MCF 10A (cell line): ENCODE measurements at regions of chr12 and their contacts with region 1.

Region 1: DNA sequence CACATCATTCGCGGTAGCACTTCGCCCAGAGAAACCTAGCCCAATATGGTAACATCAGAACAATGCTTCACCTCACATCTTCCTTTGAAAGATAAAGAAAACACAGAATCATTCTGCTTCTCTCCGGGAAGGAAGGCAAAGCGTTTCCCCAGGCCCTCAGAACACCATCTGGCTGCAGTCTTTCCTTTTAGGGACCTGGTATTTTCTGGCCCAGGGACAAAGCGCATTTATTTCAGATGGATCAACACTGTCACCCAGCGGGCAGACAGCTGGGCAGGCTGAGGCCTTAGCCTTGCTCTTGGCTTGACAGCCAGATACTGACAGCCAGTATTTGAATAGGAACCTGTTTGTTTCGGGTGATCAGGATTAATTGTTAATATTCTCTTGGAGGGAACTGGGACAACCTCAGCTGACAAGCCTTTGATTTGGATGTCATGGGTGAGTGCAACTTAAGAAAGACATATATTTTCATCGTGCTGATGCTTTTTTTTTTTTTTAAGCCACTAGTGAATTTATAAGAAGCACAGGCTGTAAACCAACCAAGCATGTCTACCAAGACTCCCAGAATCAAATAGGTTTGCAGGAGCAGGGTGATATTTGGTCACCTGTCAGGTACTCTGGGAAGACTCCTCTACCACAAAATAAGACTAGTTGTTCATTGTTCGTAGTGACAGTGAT is 118.9 kb downstream of the VEZT start:
- DNase-seq: peak; percentile 57
- H3K4me3 Mint-ChIP-seq: no peak overlapping the region
- H3K27ac Mint-ChIP-seq: no peak overlapping the region
- H3K4me1 Mint-ChIP-seq: peaks cover 6% of the 10 kb centered on the region
- H3K27me3 Mint-ChIP-seq: no peaks in the 10 kb centered on the region
- CTCF ChIP-seq: peak; percentile 71

Region 2: DNA sequence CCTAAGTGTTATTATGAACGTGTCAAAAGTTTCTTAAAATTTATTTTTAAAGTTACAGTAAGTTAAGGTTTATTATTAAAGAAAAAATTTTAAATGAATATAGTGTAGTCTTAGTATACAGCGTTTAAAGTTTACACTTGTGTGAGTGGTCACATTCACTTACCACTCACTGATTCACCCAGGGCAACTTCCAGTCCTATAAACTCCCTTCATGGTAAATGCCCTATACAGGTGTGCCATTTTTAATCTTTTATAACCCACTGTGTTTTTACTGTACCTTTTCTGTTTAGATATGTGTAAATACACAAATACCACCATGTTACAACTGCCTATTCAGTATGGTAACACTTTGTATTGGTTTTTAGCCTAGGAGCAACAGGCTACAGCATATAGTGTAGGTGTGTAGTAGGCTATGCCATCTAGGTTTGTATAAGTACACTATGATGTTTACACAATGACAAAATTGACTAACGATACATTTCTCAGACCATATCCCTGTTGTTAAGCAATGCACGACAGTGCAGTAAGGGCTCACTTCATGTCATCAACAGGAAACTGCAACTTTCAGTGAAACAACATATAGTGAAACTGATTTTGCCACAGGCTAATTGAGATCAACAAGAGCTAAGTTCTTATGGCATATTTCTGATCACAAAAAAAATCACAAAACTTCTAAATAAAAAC is 574.1 kb before region 1 on chr12:
- CTCF ChIA-PET with region 1: interaction called, 3 read pairs
- POLR2A ChIA-PET with region 1: no interaction called
- intact Hi-C with region 1: loop called (anchors 10 kb)
- DNase-seq: peak; percentile 50
- H3K4me3 Mint-ChIP-seq: no peak overlapping the region
- H3K27ac Mint-ChIP-seq: peak overlapping the region; percentile 92
- H3K4me1 Mint-ChIP-seq: peaks cover 7% of the 10 kb centered on the region
- H3K27me3 Mint-ChIP-seq: no peaks in the 10 kb centered on the region
- CTCF ChIP-seq: no peak

Region 3: DNA sequence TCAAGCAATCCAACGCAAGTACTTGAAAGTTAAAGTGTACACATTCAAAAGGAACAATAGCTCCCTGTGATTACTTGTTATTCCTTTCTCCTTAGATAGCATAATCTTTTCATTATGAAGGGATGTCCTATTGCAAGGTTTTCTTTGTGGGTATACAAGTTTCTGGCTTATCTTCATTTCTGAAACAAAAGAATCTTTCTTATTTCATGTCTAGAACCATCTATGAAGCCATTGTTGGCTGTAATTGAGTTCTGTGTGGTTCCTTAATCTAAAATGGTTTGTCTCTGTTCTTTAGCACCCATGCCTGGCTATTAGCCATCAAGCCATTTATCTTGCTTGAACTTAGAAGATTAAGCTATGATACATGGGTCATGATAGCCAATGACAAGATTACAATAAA is 23.9 kb before region 1 on chr12:
- CTCF ChIA-PET with region 1: no interaction called
- POLR2A ChIA-PET with region 1: no interaction called
- intact Hi-C with region 1: no loop called
- DNase-seq: no peak
- H3K4me3 Mint-ChIP-seq: no peak overlapping the region
- H3K27ac Mint-ChIP-seq: no peak overlapping the region
- H3K4me1 Mint-ChIP-seq: no peaks in the 10 kb centered on the region
- H3K27me3 Mint-ChIP-seq: no peaks in the 10 kb centered on the region
- CTCF ChIP-seq: no peak

Region 4: DNA sequence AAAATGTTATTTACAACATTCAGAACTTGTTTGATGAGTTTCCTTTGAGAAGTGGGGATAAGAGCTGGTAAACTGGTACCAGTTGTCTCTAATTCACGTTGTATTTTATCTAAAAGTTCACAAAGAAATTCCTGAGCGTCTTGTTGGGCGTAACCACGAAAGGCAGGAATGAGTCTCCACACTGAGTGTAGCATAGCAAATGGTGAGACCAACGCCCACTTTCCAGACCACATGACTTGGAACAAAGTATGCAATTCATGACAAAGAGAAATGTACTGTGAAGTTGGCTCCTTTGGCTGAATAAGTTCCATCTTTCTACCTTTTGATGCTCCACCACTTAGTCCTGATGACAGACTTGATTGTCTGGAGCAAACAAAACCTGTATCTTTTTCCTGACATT is 196.3 kb after region 1 on chr12:
- CTCF ChIA-PET with region 1: interaction called, 7 read pairs
- POLR2A ChIA-PET with region 1: no interaction called
- intact Hi-C with region 1: loop called (anchors 2 kb)
- DNase-seq: no peak
- H3K4me3 Mint-ChIP-seq: no peak overlapping the region
- H3K27ac Mint-ChIP-seq: no peak overlapping the region
- H3K4me1 Mint-ChIP-seq: peaks cover 18% of the 10 kb centered on the region
- H3K27me3 Mint-ChIP-seq: no peaks in the 10 kb centered on the region
- CTCF ChIP-seq: no peak

Region 5: GRCh38 chr12:96153131-96153725 is 816.7 kb after region 1 on chr12:
- CTCF ChIA-PET with region 1: no interaction called
- POLR2A ChIA-PET with region 1: no interaction called
- intact Hi-C with region 1: no loop called
- DNase-seq: no peak
- H3K4me3 Mint-ChIP-seq: no peak overlapping the region
- H3K27ac Mint-ChIP-seq: no peak overlapping the region
- H3K4me1 Mint-ChIP-seq: no peaks in the 10 kb centered on the region
- H3K27me3 Mint-ChIP-seq: no peaks in the 10 kb centered on the region
- CTCF ChIP-seq: no peak